ENCODE measurements at regions of chr18 and their contacts with region 1.

Region 1: GRCh38 chr18:42053188-42053781 is 98.3 kb downstream of the PIK3C3 start:
- DNase-seq: peak; percentile 62
- ATAC-seq: peak; percentile 80
- H3K4me3 ChIP-seq: no peak overlapping the region
- H3K27ac ChIP-seq: no peak overlapping the region
- H3K4me1 ChIP-seq: no peaks in the 10 kb centered on the region
- H3K27me3 ChIP-seq: no peaks in the 10 kb centered on the region
- CTCF ChIP-seq: peak; percentile 76
- POLR2A ChIP-seq: no peak
- RAD21 ChIP-seq: peak; percentile 62

Region 2: GRCh38 chr18:42038936-42039335 is 14.3 kb before region 1 on chr18:
- CTCF ChIA-PET with region 1: interaction called, 12 read pairs
- POLR2A ChIA-PET with region 1: no interaction called
- dilution Hi-C with region 1: no loop called
- in situ Hi-C with region 1: no loop called
- intact Hi-C with region 1: no loop called
- DNase-seq: peak; percentile 96
- ATAC-seq: peak; percentile 96
- H3K4me3 ChIP-seq: no peak overlapping the region
- H3K27ac ChIP-seq: no peak overlapping the region; the same call in 1 of the 2 replicates
- H3K4me1 ChIP-seq: peaks cover 5% of the 10 kb centered on the region
- H3K27me3 ChIP-seq: no peaks in the 10 kb centered on the region
- CTCF ChIP-seq: no peak
- POLR2A ChIP-seq: no peak
- RAD21 ChIP-seq: no peak

Region 3: DNA sequence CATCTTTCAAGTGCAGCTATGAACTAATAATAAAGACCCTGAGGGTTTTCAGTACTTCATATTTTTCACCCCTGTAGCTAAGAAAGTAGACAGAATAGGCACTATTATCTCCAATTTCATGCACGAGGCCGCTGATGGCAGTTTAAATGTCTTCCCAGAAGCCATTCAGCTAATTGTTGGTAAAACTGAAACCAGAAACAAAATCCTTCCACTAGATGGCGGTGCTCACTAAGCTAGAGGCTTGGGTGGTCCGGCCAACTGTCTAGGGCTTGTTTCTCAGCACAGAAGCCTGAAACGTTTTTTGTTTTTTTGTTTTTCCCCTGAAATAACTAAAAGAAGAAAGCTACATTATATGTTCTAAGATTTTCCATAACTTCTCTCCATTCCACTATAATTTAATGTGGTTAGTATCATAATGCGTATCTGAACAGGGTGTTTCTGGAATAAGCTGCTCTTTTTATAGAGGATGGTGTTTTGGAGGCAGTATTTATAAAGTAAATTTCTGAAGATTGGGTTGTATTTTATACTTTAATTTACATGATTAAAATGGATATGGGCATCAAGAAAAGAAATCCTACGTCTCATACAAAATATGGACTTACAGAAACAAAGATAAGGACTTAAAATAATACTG is 61.1 kb after region 1 on chr18:
- CTCF ChIA-PET with region 1: interaction called, 19 read pairs
- POLR2A ChIA-PET with region 1: no interaction called
- dilution Hi-C with region 1: no loop called
- in situ Hi-C with region 1: no loop called
- intact Hi-C with region 1: loop called (anchors 1 kb)
- DNase-seq: peak; percentile 75
- ATAC-seq: peak; percentile 97
- H3K4me3 ChIP-seq: no peak overlapping the region
- H3K27ac ChIP-seq: no peak overlapping the region
- H3K4me1 ChIP-seq: peaks cover 4% of the 10 kb centered on the region
- H3K27me3 ChIP-seq: no peaks in the 10 kb centered on the region
- CTCF ChIP-seq: peak; percentile 96
- POLR2A ChIP-seq: no peak
- RAD21 ChIP-seq: peak; percentile 95

Region 4: DNA sequence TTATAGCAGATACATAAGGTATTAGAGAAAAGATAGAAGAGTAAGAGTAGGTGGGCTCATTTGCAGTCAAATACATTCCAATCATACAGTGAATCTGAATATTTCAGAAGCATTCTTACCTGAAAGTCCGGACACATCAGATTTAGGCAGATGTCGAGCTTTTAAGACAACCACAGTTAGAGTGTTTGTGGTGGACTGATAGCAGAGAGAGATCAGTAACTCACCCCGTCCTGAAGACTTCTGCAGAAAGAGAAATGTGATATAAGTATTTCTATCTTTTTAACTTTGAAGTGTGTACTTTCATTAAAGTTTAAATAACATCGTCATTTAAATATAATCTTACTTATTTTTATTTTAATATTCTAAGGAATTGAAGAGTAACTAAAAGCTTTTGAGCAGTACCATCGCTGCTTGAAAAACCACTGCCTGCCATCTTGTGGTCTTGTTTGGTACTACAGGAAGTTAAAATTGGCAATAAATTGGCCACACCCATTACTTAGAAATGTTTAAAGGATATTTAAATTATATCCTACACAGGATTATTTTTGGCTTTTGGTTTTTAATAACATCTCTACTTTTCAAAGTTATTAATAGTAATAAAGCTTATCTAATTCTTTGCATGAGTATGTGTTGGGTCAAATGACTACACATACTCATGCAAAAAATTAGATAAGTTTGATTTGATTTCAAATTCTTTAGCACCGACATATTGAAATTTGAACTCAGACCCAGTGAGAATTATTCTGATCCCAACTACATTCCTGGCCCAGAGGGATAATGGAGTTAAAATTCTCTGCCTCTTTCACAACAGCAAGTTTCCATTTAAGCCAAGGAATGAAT is 1218.5 kb after region 1 on chr18:
- CTCF ChIA-PET with region 1: interaction called, 11 read pairs
- POLR2A ChIA-PET with region 1: no interaction called
- dilution Hi-C with region 1: no loop called
- in situ Hi-C with region 1: no loop called
- intact Hi-C with region 1: loop called (anchors 2 kb)
- DNase-seq: peak; percentile 61
- ATAC-seq: peak; percentile 72
- H3K4me3 ChIP-seq: no peak overlapping the region
- H3K27ac ChIP-seq: no peak overlapping the region
- H3K4me1 ChIP-seq: no peaks in the 10 kb centered on the region
- H3K27me3 ChIP-seq: no peaks in the 10 kb centered on the region
- CTCF ChIP-seq: peak; percentile 70
- POLR2A ChIP-seq: no peak
- RAD21 ChIP-seq: peak; percentile 61